Right ventricle myocardium inferior (tissue), 1 donor: ENCODE measurements at regions of chr6 and their contacts with region 1.

Region 1: GRCh38 chr6:133568970-133569889 is 319.7 kb upstream of the TCF21 start:
- DNase-seq: no peak
- ATAC-seq: peak; percentile 87

Region 2: DNA sequence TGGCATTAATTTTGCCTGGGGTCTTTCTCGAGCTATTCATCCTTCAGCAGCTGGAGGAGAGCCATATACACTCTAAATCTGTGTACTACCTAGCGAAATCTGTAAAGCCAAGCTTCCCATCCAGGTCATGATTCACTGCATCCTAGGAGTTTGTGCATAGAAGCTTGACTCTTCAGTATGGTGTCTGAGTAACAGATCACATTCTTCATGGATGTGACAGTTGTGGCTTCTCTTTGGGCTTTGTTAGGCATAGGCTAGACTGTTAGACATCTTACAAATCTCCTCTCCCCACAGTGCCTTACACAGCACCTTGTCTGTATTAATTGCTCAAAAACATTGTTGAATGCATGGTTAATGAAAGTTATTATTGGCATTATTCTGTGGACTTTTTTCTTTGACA is 151.1 kb before region 1 on chr6:
- intact Hi-C with region 1: no loop called
- DNase-seq: no peak
- ATAC-seq: no peak

Region 3: GRCh38 chr6:133632206-133632605 is 63.0 kb after region 1 on chr6:
- intact Hi-C with region 1: no loop called
- DNase-seq: no peak
- ATAC-seq: no peak

Region 4: GRCh38 chr6:133837801-133838349 is 268.6 kb after region 1 on chr6:
- intact Hi-C with region 1: loop called (anchors 5 kb)
- DNase-seq: no peak
- ATAC-seq: peak; percentile 39

Region 5: GRCh38 chr6:133916650-133917151 is 347.5 kb after region 1 on chr6:
- intact Hi-C with region 1: loop called (anchors 2 kb)
- DNase-seq: peak; percentile 92
- ATAC-seq: peak; percentile 90

Region 6: DNA sequence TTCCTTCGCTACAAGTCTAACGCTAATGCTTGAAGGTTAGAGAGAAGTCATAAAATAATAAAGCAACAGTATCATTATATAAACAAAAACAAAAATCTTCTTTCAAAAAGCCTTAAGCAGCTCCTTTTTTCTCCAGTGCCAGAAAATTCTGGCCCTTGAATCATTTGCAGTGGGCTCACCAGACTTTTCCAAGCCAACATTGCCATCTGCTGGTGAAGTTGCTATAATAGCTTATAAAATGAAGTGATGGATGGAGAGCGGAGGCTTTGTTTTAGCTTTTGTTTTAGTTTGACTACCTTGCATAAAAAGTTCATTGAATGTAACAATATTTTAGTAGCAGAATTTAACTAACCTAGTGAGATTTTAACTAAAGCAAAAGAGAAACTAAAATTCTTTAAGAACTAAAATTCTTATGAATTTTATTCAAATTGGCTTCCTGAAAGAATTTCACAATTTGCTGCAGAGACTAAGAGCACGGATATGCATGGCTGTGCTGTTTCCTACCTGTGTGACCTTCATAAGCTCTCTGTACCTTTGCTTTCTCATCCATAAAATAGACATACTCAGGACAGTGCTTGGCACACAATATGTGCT is 528.0 kb after region 1 on chr6:
- intact Hi-C with region 1: loop called (anchors 2 kb)
- DNase-seq: no peak
- ATAC-seq: no peak